Colonic mucosa (tissue), 4 donors: ENCODE measurements at regions of chr3 and their contacts with region 1.

Region 1: GRCh38 chr3:154252759-154253638 is 71.3 kb downstream of the DHX36 start:
- DNase-seq: peak; percentile 92
- H3K4me3 ChIP-seq: no peak overlapping the region
- H3K27ac ChIP-seq: no peak overlapping the region
- H3K4me1 ChIP-seq: no peaks in the 10 kb centered on the region
- H3K27me3 ChIP-seq: no peaks in the 10 kb centered on the region
- CTCF ChIP-seq: peak; percentile 77

Region 2: DNA sequence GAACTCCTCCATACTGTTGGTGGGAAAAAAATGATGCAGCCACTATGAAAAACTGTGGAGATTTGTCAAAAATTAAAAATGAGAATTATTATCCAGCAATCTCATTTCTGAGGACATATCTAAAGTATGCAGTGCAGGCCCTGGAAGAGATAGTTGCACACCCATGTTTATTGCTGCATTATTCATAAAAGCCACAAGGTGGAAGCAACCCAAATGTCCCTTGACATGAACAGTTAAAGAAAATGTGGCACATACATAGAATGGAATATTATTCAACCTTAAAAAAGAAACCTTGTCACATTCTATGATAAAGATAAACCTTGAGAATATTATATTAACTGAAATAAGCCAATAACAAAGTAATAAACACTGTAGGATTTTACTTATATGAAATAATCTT is 212.7 kb before region 1 on chr3:
- intact Hi-C with region 1: loop called (anchors 5 kb)
- DNase-seq: no peak
- H3K4me3 ChIP-seq: no peak overlapping the region
- H3K27ac ChIP-seq: no peak overlapping the region
- H3K4me1 ChIP-seq: no peaks in the 10 kb centered on the region
- H3K27me3 ChIP-seq: no peaks in the 10 kb centered on the region
- CTCF ChIP-seq: peak; percentile 28

Region 3: DNA sequence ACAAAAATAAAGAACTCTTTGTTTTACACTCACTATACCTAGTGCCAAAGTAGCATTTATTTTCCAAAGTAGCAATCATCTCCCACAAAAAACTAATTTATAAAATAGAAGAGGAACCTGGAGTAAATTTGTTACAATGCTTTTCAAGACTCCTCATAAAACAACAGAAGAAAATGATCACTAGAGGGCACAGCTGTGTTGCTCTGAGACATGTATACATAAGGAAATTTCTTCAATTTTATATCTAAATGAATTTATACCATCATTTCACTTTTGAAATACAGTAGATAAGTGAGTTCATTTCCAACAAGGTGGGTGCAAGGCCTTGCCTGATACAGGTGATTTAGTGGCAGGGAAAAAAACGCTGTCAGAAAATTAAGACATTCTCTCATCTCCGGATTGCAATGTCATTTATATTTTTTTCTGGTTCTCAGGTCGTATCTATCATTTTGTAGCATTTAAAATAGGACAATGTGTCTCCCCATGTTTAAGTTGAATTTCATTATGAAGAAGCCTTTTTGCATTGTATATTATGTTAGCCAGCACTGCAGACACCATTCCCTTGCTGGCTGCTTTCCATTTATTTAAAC is 157.1 kb before region 1 on chr3:
- intact Hi-C with region 1: loop called (anchors 2 kb)
- DNase-seq: no peak
- H3K4me3 ChIP-seq: no peak overlapping the region
- H3K27ac ChIP-seq: no peak overlapping the region
- H3K4me1 ChIP-seq: no peaks in the 10 kb centered on the region
- H3K27me3 ChIP-seq: no peaks in the 10 kb centered on the region
- CTCF ChIP-seq: peak; percentile 43

Region 4: GRCh38 chr3:154323891-154324738 is 71.1 kb after region 1 on chr3 and contains the start of gene DHX36:
- intact Hi-C with region 1: no loop called
- DNase-seq: peak; percentile 89
- H3K4me3 ChIP-seq: peak within 1 kb of the TSS; percentile 64
- H3K27ac ChIP-seq: peak within 1 kb of the TSS; percentile 90
- H3K4me1 ChIP-seq: peaks cover 6% of the 10 kb centered on the region
- H3K27me3 ChIP-seq: no peaks in the 10 kb centered on the region
- CTCF ChIP-seq: no peak
- total RNA-seq, gene DHX36: 40.7 to 51.8 TPM

Region 5: GRCh38 chr3:154364849-154365248 is 111.8 kb after region 1 on chr3:
- intact Hi-C with region 1: no loop called
- DNase-seq: no peak
- H3K4me3 ChIP-seq: no peak overlapping the region
- H3K27ac ChIP-seq: no peak overlapping the region
- H3K4me1 ChIP-seq: no peaks in the 10 kb centered on the region
- H3K27me3 ChIP-seq: no peaks in the 10 kb centered on the region
- CTCF ChIP-seq: no peak